Lower leg skin (tissue), 4 donors: ENCODE measurements at regions of chr9 and their contacts with region 1.

Region 1: DNA sequence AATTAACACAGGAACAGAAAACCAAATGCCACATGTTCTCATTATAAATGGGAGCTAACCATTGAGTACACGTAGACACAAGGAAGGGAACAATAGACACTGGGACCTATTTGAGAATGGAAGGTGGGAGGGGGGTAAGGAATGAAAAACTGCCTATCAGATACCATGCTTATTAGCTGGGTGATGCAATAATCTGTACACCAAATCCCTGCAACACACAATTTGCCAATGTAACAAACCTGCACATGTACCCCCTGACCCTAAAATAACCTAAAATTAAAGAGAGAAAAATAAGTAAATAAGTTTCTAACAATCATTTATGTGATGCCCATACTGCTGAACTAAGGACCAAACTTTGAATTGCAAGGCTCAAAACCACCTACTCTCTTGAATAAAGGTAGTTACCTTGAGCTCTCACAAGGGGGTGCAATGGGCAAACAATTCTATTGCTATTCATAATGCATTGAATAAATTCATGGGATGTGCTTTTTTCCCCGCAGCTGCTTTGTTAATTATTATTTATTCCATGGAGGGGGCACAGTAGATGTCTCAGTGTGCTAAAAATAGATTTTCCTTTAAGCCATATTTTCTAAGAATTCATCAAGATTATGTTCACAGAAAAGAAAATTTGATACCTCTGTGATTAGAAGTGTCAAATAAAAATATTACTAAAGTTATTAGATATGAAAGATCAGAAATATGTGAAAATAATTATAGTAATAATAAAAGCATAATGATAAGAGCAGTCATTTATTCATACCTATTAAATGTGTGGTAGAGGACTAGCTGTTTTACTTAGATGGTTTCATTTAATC is 76.2 kb upstream of the PTPN3 start:
- DNase-seq: no peak
- H3K4me3 ChIP-seq: no peak overlapping the region
- CTCF ChIP-seq: peak in 1 of 3 donors; percentile 11
- POLR2A ChIP-seq: no peak

Region 2: DNA sequence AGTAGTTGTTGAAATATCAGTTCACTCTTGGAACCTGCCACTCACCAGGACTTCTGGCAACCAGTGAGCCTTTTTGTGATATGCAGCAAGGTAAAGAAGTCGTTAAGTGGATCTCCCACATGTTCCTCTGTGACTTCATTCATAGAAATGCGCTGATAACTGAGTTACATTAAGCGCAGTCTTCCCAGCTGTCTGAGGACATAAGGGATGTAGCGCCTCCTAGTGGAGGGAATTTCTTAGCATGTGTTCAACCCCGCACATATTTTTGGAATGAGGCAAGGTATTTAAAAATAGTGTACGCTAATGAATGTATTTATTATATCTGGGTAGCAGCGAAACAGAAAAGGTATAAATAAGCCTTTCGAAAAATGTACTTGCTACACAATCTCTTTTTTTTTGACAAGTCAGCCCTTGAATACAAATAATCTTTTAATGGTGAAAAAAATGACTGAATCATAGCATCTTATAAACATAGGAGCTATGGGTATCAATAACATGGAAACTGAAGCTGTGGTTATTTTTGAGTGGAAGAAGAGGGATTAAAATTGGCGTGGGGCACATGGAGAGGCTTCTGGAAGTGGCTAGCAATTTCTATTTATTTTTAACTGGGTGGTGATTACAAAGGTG is 243.7 kb after region 1 on chr9:
- intact Hi-C with region 1: loop called (anchors 10 kb)
- DNase-seq: peak; percentile 84 to 86
- H3K4me3 ChIP-seq: no peak overlapping the region
- CTCF ChIP-seq: peak in 1 of 3 donors; percentile 46
- POLR2A ChIP-seq: no peak